ENCODE measurements at regions of chr9 and their contacts with region 1.

Region 1: DNA sequence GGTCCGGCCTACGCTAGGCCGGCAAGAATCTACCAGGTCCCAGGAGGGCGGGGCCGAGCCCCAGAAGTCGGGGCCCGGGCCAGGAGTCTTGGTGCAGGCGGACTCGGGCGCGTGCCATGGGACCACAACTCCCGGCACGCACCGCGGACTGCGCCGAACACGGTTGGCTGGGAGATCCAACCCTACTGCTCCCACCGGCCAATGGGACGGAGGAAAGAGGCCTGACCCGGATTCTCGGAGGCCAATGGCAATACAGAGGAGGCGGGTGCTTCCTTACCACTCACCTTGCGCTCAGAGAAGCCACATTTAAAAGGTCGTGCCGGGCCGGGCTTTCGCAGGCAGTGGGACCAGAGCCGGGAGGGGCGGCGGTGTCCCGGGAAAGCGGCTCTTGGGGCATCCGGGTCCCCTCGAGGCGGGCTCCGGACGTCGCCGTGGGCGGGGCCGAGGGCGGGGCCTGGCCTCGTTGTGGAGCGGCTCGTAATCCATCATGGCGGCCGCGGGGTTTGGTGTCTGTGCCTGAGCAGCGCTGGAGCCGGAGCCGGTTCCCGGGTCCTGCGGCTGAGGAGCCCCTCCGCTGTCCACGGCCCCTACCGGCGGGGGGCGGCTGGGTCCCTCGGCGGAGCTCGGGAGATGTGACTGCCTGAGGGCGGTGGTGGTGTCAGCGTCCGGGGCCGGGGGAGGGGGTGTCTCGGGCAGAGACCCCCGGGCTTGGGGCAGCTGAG is 19.1 kb downstream of the EXOSC2 start:
- DNase-seq: peak; percentile 94
- H3K4me3 Mint-ChIP-seq: peak overlapping the region; percentile 95
- H3K27ac Mint-ChIP-seq: peak overlapping the region; percentile 87
- H3K4me1 Mint-ChIP-seq: peaks cover 30% of the 10 kb centered on the region
- H3K27me3 Mint-ChIP-seq: no peaks in the 10 kb centered on the region

Region 2: DNA sequence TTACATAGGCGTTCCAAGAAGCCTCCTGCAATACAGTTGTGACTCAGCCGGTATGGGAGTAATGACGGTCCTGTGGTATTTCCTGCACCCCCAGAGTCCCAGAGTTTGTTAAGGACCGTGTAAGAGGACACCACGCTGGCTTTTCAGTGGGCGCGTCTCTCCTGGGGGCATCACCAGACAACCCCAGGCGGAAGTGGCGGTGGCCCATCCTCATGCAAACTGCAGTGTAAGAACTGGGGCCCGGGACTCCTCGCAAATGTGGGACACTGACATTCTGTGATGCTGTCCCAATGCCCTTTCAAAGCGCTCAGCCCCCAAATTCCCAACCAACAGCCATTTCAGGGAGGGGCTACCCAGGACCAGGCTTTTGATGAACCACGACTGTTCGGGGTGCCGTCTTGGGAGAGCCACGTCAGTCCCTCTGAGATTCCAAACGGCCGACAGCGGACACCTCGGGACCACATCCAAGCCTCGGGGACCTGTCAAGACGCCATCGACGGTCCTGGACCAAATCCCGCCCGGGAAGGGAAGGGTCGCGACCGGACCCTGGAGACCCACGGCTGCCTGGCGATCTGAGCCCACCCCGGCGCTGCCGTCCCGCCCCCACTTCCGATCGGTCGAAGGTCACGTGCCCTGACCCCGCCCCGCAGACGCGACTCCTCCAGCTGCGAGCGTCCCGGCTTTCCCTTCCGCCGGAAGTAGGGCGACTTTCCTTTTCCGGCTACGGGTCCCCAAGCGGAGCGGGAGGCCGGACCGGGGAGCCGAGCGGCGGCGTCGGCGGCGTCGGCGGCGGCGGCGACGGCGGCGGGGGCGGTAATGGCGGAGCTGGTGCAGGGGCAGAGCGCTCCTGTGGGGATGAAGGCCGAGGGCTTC is 133.6 kb before region 1 on chr9 and contains the start of gene FUBP3:
- intact Hi-C with region 1: loop called (anchors 5 kb)
- DNase-seq: peak; percentile 89
- H3K4me3 Mint-ChIP-seq: peak within 1 kb of the TSS; percentile 84
- H3K27ac Mint-ChIP-seq: peak within 1 kb of the TSS; percentile 84
- H3K4me1 Mint-ChIP-seq: peaks cover 27% of the 10 kb centered on the region
- H3K27me3 Mint-ChIP-seq: peaks cover 2% of the 10 kb centered on the region
- total RNA-seq, gene FUBP3: 52.6 and 54.6 TPM in 2 replicates

Region 3: GRCh38 chr9:130682490-130683121 is 30.1 kb before region 1 on chr9:
- intact Hi-C with region 1: loop called (anchors 1 kb)
- DNase-seq: peak; percentile 24
- H3K4me3 Mint-ChIP-seq: peak overlapping the region; percentile 87
- H3K27ac Mint-ChIP-seq: peak overlapping the region; percentile 76
- H3K4me1 Mint-ChIP-seq: peaks cover 10% of the 10 kb centered on the region
- H3K27me3 Mint-ChIP-seq: peaks cover 28% of the 10 kb centered on the region

Region 4: GRCh38 chr9:130693426-130694191 is 19.1 kb before region 1 on chr9 and contains the start of gene EXOSC2:
- intact Hi-C with region 1: loop called (anchors 1 kb)
- DNase-seq: peak; percentile 88
- H3K4me3 Mint-ChIP-seq: peak within 1 kb of the TSS; percentile 99
- H3K27ac Mint-ChIP-seq: peak within 1 kb of the TSS; percentile 97
- H3K4me1 Mint-ChIP-seq: peaks cover 54% of the 10 kb centered on the region
- H3K27me3 Mint-ChIP-seq: peaks cover 3% of the 10 kb centered on the region
- total RNA-seq, gene EXOSC2: 107 TPM in 2 replicates

Region 5: DNA sequence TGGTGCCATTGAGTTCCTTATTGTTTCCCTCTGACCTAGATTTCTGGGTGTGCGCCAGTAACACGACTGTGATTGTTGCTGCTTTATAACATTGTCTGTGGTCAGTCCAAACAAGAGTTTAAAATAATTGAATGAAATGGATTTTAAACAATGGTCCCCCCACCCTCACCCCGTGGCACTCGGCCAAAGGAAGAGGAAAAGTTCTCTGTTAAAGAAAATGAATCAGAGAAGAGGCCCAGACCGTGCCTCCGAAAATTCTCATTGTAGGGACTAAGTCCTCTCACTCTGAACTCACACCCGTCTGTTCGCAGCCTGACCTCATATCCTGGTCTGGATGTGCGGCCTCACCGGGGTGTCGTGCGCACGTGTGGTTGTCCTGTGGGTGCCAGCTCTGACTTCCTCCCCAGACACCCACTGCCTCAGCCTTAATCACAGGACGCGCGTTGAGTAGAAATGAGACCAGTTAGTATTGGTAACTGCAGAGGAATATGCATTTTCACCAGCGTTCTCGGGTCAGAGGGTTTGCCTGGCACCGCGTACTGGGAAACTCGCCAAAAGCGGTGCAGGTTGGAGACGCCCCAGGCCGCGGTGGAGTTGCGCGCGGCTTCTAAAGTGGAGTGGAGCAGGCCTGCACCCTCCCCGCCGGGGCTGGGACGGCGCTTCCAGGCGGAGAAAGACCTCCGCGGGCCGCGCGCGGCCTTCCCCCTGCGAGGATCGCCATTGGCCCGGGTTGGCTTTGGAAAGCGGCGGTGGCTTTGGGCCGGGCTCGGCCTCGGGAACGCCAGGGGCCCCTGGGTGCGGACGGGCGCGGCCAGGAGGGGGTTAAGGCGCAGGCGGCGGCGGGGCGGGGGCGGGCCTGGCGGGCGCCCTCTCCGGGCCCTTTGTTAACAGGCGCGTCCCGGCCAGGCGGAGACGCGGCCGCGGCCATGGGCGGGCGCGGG is 121.9 kb after region 1 on chr9 and contains the start of gene ABL1:
- intact Hi-C with region 1: loop called (anchors 10 kb)
- DNase-seq: peak; percentile 29
- H3K4me3 Mint-ChIP-seq: peak within 1 kb of the TSS; percentile 98
- H3K27ac Mint-ChIP-seq: peak within 1 kb of the TSS; percentile 96
- H3K4me1 Mint-ChIP-seq: peaks cover 29% of the 10 kb centered on the region
- H3K27me3 Mint-ChIP-seq: peaks cover 23% of the 10 kb centered on the region
- total RNA-seq, gene ABL1: 34.2 and 36.2 TPM in 2 replicates